ENCODE measurements at regions of chr2 and their contacts with region 1.

Region 1: DNA sequence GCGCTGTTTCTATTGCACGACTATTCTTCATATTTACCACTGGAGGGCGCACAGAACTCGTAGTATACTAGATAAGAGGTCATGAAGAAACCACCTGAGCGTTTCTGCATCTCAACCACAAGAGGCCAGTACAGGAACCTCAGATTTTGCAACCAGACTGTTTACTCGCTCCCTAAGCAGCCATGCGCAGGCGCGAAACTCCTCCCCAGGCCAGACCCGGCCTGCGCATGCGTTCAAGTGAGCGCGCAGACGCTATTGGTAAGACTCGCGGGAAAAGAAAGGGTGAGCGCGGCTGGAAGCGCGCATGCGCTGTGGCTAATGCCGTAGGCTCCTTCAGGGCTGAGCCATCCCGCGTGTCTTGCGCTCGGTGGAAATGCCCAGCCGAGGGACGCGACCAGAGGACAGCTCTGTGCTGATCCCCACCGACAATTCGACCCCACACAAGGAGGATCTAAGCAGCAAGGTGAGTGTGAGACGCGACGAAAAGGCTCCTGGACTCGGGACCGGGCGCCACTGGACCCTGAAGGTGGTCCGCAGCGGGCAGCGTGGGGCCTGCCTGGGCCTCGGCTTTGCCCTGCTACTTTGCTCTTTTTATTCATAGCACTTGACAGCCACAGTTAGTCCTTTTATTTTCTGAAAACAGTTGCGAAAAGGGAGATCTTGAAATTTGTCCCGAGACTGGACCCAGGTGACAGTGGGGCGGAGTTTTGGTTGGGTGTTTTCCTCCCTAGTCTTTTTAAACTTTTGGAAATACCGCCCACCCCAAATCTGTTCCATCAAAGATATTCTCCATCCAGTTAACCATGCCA is at the start of gene ASNSD1:
- DNase-seq: peak; percentile 99
- ATAC-seq: peak; percentile 90
- H3K4me3 ChIP-seq: peak within 1 kb of the TSS; percentile 73 to 92
- H3K27ac ChIP-seq: peak within 1 kb of the TSS; percentile 39; the same call in 1 of the 2 replicates
- H3K4me1 ChIP-seq: peaks cover 0 to 11% of the 10 kb centered on the region in 2 experiments; a peak in 2 of 4 replicates
- H3K27me3 ChIP-seq: no peaks in the 10 kb centered on the region
- CTCF ChIP-seq: peak; percentile 91 to 100 (median 96)
- POLR2A ChIP-seq: peak; percentile 94
- RAD21 ChIP-seq: peak; percentile 100
- total RNA-seq, gene ASNSD1: 33.6 TPM

Region 2: DNA sequence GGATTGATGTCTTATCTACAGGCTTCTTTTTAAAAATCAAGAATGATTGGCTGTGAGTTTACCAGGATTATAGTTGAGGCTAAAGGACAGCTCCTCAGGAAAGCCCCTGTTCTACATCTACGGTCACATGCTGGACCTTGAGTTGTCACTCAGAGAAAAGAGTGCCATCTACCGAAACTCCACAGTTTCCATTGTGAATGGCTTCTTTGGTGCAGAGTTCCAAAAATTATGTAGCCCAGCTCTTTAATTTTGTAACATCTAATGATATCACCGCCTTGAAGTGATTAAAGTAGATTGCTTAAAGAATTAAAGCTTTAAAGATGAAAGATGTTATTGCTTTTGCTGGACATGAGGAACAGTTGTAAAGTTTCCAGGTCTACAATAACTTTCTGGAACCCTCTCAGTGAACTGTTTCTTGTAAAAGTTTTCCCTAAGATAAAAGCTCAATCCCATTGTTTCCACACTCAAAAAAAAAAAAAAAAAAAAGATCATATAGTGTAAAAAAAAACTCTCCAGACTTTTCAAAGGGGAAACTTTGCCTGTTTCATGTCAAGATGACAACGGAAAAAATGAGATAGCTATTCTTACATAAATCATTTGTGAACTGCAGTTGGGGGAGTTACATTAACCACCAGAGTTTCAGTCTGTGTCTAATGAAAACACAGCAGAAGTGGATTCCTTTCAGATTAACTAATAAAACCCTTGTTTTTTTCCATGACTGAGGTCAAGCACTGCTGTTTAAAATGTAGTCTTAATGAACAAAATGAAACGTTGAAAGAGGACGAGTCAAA is 682.9 kb before region 1 on chr2:
- CTCF ChIA-PET with region 1: no interaction called
- POLR2A ChIA-PET with region 1: no interaction called
- RAD21 ChIA-PET with region 1: no interaction called
- intact Hi-C with region 1: no loop called
- DNase-seq: peak; percentile 31
- ATAC-seq: peak; percentile 92
- H3K4me3 ChIP-seq: no peak overlapping the region; a peak in 1 of 4 replicates
- H3K27ac ChIP-seq: no peak overlapping the region
- H3K4me1 ChIP-seq: peaks cover 0 to 18% of the 10 kb centered on the region in 2 experiments; a peak in 2 of 4 replicates
- H3K27me3 ChIP-seq: no peaks in the 10 kb centered on the region
- CTCF ChIP-seq: peak; percentile 42 to 57 (median 46); a peak in 4 of 6 replicates
- POLR2A ChIP-seq: no peak
- RAD21 ChIP-seq: peak; percentile 78

Region 3: DNA sequence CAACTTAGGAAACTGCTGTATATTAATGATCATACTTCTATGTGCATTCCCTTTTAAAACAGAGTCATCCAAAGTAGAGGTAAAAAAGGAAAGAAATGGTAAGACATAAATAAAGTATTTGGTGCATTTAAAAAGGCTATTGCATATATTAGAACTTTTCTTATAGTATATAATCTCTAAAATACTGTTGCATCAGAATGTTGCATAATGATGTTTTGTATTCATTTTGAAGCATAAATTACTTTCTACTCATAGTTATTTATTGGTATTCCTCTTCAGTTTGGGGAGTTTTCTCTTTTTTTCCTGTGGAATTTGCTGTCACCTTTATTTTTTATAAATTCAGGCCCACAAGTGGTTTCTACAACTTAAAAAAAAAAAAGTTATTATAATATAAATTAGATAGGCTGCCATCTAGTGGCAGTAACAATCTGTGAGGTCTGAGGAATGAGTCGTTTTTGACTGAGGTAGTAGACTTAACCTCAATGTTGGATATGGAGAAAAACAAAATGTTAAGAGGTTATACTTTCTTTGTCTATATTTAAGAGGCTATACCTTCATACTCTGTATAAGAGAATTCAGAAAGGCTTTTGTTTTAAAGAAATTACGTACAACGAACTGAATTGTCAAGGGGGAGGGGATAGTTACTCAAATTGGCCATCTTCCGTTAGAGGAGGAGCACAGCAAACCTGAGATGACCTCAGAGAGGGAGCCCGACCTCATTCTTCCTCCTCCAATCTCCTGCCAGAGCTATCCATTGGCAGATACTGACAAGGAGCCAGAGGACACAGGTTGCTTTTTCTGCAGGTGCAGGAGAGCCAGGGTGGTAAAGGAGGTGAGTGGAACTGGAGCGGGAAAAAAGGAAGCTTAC is 36.9 kb after region 1 on chr2:
- CTCF ChIA-PET with region 1: interaction called, 16 read pairs
- POLR2A ChIA-PET with region 1: no interaction called
- RAD21 ChIA-PET with region 1: interaction called, 4 to 6 read pairs
- intact Hi-C with region 1: loop called (anchors 1 kb)
- DNase-seq: peak; percentile 41
- ATAC-seq: peak; percentile 80
- H3K4me3 ChIP-seq: no peak overlapping the region
- H3K27ac ChIP-seq: no peak overlapping the region
- H3K4me1 ChIP-seq: peaks cover 0 to 3% of the 10 kb centered on the region in 2 experiments; a peak in 1 of 4 replicates
- H3K27me3 ChIP-seq: no peaks in the 10 kb centered on the region
- CTCF ChIP-seq: peak; percentile 42 to 67 (median 54); a peak in 5 of 6 replicates
- POLR2A ChIP-seq: no peak
- RAD21 ChIP-seq: peak; percentile 38; the same call in 1 of the 2 replicates

Region 4: GRCh38 chr2:189751080-189751658 is 89.8 kb after region 1 on chr2:
- CTCF ChIA-PET with region 1: interaction called, 7 read pairs
- POLR2A ChIA-PET with region 1: no interaction called
- RAD21 ChIA-PET with region 1: no interaction called
- intact Hi-C with region 1: loop called (anchors 2 kb)
- DNase-seq: peak; percentile 15
- ATAC-seq: peak; percentile 94
- H3K4me3 ChIP-seq: no peak overlapping the region
- H3K27ac ChIP-seq: no peak overlapping the region
- H3K4me1 ChIP-seq: no peaks in the 10 kb centered on the region
- H3K27me3 ChIP-seq: no peaks in the 10 kb centered on the region
- CTCF ChIP-seq: peak; percentile 67 to 78 (median 77); a peak in 5 of 6 replicates
- POLR2A ChIP-seq: no peak
- RAD21 ChIP-seq: peak; percentile 68

Region 5: GRCh38 chr2:189762551-189763298 is 101.4 kb after region 1 on chr2 and contains the start of gene OSGEPL1:
- CTCF ChIA-PET with region 1: interaction called, 13 read pairs
- POLR2A ChIA-PET with region 1: interaction called, 4 read pairs
- RAD21 ChIA-PET with region 1: no interaction called
- intact Hi-C with region 1: no loop called
- DNase-seq: peak; percentile 96
- ATAC-seq: peak; percentile 96
- H3K4me3 ChIP-seq: peak within 1 kb of the TSS; percentile 63 to 73
- H3K27ac ChIP-seq: peak within 1 kb of the TSS; percentile 74
- H3K4me1 ChIP-seq: peaks cover 3 to 17% of the 10 kb centered on the region in 2 experiments; a peak in 3 of 4 replicates
- H3K27me3 ChIP-seq: no peaks in the 10 kb centered on the region
- CTCF ChIP-seq: peak; percentile 50 to 56 (median 55); a peak in 5 of 6 replicates
- POLR2A ChIP-seq: peak; percentile 77
- RAD21 ChIP-seq: peak; percentile 27; the same call in 1 of the 2 replicates
- total RNA-seq, gene OSGEPL1: 11.2 TPM

Region 6: GRCh38 chr2:190069936-190070696 is 408.8 kb after region 1 on chr2:
- CTCF ChIA-PET with region 1: interaction called, 6 read pairs
- POLR2A ChIA-PET with region 1: no interaction called
- RAD21 ChIA-PET with region 1: interaction called in 1 of 2 experiments, 4 read pairs
- intact Hi-C with region 1: loop called (anchors 1 kb)
- DNase-seq: peak; percentile 71
- ATAC-seq: 0 out of 2 replicates have a peak, but pooled peaks have one; percentile 32
- H3K4me3 ChIP-seq: no peak overlapping the region
- H3K27ac ChIP-seq: no peak overlapping the region
- H3K4me1 ChIP-seq: no peaks in the 10 kb centered on the region
- H3K27me3 ChIP-seq: no peaks in the 10 kb centered on the region
- CTCF ChIP-seq: peak; percentile 48 to 89 (median 58)
- POLR2A ChIP-seq: no peak
- RAD21 ChIP-seq: peak; percentile 85

Region 7: DNA sequence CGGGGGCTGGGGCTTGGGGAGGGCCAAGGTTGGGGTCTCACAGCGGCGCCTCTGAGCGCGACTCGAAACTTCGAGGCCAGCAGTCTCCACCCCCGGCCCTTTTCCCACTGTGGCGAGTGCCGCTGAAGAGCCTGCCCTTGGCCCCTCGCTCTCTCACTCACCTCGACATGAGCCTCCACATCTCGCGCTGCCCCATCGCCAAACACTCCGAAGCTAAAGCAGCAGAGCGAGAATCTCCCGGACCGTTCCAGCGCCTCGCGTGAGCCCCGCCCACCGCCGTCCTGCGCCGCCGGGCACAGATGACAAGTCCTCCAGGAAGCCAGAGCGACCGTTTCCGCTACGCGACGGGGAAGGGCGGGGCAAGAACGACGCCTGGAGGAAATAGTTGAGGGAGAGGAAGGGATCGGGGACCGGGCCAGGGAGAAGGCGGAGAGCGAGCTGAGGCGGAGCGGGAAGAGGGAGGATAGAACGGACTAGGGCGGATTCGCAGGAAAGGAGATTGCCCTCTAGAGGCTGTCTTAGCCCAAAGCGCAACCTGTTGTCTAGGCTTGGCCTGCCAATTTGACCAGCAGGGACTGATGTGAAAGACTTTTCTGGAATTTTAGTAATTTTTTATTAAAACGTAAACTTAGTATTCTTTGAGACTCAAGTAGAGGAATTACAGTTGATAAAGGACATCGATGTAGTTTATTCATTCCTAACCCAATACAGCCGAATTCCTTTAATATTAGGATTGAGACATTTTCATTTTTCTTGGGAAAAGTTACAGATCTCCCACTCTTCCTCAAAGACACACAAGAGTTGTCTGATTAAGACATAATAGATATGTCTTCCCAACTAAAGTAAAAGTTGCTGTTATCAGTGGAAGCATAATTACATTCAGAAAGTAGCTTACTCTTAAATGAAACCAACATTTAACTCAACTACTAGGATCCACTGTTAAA is 658.5 kb after region 1 on chr2 and contains the start of gene HIBCH:
- CTCF ChIA-PET with region 1: no interaction called
- POLR2A ChIA-PET with region 1: no interaction called
- RAD21 ChIA-PET with region 1: no interaction called
- intact Hi-C with region 1: loop called (anchors 10 kb)
- DNase-seq: peak; percentile 99
- ATAC-seq: peak; percentile 97
- H3K4me3 ChIP-seq: peak within 1 kb of the TSS; percentile 85 to 89
- H3K27ac ChIP-seq: peak within 1 kb of the TSS; percentile 50
- H3K4me1 ChIP-seq: peaks cover 6 to 16% of the 10 kb centered on the region in 2 experiments; a peak in 3 of 4 replicates
- H3K27me3 ChIP-seq: no peaks in the 10 kb centered on the region
- CTCF ChIP-seq: peak; percentile 70 to 89 (median 76)
- POLR2A ChIP-seq: peak; percentile 44
- RAD21 ChIP-seq: peak; percentile 43
- total RNA-seq, gene HIBCH: 24.7 TPM